Activated CD8-positive, alpha-beta T cell treated with anti-CD3 and anti-CD28 coated beads, Interleukin-2, amount 10 ng/mL, durations not matched to agents 7 days and 5 days (primary cell): ENCODE measurements at regions of chr11 and their contacts with region 1.

Region 1: GRCh38 chr11:118621071-118621783 is 13.8 kb downstream of the PHLDB1 start:
- DNase-seq: peak; percentile 28
- ATAC-seq: peak; percentile 76
- H3K4me3 Mint-ChIP-seq: peak overlapping the region; percentile 48
- H3K27ac Mint-ChIP-seq: no peak overlapping the region
- H3K4me1 Mint-ChIP-seq: peaks cover 6% of the 10 kb centered on the region
- H3K27me3 Mint-ChIP-seq: peaks cover 16% of the 10 kb centered on the region

Region 2: GRCh38 chr11:118450451-118450850 is 170.8 kb before region 1 on chr11:
- CTCF ChIA-PET with region 1: no interaction called
- POLR2A ChIA-PET with region 1: no interaction called
- DNase-seq: no peak
- ATAC-seq: no peak
- H3K4me3 Mint-ChIP-seq: no peak overlapping the region
- H3K27ac Mint-ChIP-seq: no peak overlapping the region
- H3K4me1 Mint-ChIP-seq: peaks cover 46% of the 10 kb centered on the region
- H3K27me3 Mint-ChIP-seq: no peaks in the 10 kb centered on the region

Region 3: GRCh38 chr11:118610804-118611795 is 10.1 kb before region 1 on chr11:
- CTCF ChIA-PET with region 1: interaction called, 10 read pairs
- POLR2A ChIA-PET with region 1: no interaction called
- DNase-seq: peak; percentile 85
- ATAC-seq: peak; percentile 71
- H3K4me3 Mint-ChIP-seq: peak overlapping the region; percentile 55
- H3K27ac Mint-ChIP-seq: no peak overlapping the region
- H3K4me1 Mint-ChIP-seq: peaks cover 26% of the 10 kb centered on the region
- H3K27me3 Mint-ChIP-seq: peaks cover 23% of the 10 kb centered on the region

Region 4: GRCh38 chr11:118666371-118666770 is 45.1 kb after region 1 on chr11:
- CTCF ChIA-PET with region 1: no interaction called
- POLR2A ChIA-PET with region 1: no interaction called
- DNase-seq: no peak
- ATAC-seq: no peak
- H3K4me3 Mint-ChIP-seq: no peak overlapping the region
- H3K27ac Mint-ChIP-seq: no peak overlapping the region
- H3K4me1 Mint-ChIP-seq: peaks cover 4% of the 10 kb centered on the region
- H3K27me3 Mint-ChIP-seq: peaks cover 17% of the 10 kb centered on the region